Spleen (tissue), 13 donors: ENCODE measurements at regions of chr1 and their contacts with region 1.

Region 1: DNA sequence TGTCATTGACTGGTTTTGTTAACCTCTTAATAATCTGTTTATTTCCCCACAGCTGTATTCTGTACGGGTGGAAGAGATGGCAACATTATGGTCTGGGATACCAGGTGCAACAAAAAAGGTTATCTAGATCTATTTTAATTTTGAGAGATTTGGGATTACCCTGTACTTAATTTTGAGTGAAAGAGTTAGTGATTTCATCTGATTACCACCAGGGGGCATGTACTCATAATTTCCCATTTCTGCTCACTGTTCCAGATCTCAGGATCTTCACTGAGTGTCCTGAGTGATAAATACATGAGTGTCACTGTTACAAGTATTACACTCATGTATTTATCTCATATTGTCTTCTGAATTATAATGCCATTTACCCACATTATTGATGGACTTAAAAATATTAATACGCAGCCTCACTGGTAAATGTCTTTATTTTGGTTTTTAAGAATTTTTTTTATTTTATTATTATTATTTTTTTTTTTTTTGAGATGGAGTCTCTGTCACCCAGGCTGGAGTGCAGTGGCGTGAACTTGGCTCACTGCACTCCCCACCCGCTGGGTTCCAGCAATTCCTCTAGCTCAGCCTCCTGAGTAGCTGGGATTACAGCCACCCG is 27.4 kb downstream of the DTL start:
- DNase-seq: no peak
- H3K4me3 ChIP-seq: no peak overlapping the region
- H3K27ac ChIP-seq: no peak overlapping the region
- H3K4me1 ChIP-seq: peaks cover 0 to 9% (median 0%) of the 10 kb centered on the region in 6 donors
- H3K27me3 ChIP-seq: no peaks in the 10 kb centered on the region
- CTCF ChIP-seq: peak; percentile 8 to 75 (median 57)
- POLR2A ChIP-seq: no peak

Region 2: DNA sequence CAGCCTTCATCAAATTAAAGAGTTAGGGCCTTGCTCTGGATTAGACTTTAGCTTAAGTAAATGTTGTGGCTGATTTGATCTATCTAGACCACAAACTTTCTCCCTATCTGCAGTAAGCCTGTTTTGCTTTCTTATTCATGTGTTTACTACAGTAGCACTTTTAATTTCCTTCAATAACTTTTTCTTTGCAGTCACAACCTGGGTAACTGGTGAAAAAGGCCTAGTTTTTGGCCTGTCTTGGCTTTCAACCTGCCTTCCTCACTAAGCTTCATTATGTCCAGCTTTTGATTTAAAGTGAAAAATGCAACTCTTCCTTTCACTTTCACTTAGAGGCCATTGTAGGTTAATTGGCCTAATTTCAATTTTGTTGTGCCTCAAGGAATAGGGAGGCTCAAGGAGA is 219.9 kb before region 1 on chr1:
- intact Hi-C with region 1: no loop called
- DNase-seq: no peak
- H3K4me3 ChIP-seq: peak overlapping the region in 1 of 8 donors; percentile 26
- H3K27ac ChIP-seq: peak overlapping the region in 6 of 8 donors; percentile 10 to 61 (median 47)
- H3K4me1 ChIP-seq: peaks cover 0 to 16% (median 12%) of the 10 kb centered on the region in 6 donors
- H3K27me3 ChIP-seq: no peaks in the 10 kb centered on the region
- CTCF ChIP-seq: no peak
- POLR2A ChIP-seq: no peak

Region 3: DNA sequence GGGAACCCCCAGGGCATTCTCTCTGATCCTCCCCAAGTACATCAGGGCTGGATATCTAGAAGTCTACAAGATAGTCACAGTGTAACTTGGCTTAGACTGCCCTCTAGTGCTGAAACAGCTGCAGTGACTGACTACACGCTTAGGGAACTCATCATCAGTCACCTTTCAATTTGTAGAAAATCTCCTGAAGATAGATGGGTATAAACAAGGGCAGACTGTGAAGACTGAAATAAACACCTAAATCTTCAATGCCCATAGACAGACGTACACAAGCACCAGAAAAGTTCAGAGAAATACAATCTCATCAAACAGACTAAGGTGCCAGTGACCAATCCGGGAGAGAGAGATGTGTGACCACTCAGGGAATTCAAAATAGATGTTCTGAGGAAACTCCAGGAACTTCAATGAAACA is 305.1 kb after region 1 on chr1:
- intact Hi-C with region 1: loop called (anchors 5 kb)
- DNase-seq: no peak
- H3K4me3 ChIP-seq: no peak overlapping the region
- H3K27ac ChIP-seq: no peak overlapping the region
- H3K4me1 ChIP-seq: no peaks in the 10 kb centered on the region
- H3K27me3 ChIP-seq: no peaks in the 10 kb centered on the region
- CTCF ChIP-seq: peak; percentile 39 to 83 (median 68)
- POLR2A ChIP-seq: no peak